ENCODE measurements at regions of chrX and their contacts with region 1.

Region 1: GRCh38 chrX:153953342-153953830 is 8.9 kb upstream of the RENBP start:
- DNase-seq: peak; percentile 79
- ATAC-seq: peak; percentile 70 to 80

Region 2: DNA sequence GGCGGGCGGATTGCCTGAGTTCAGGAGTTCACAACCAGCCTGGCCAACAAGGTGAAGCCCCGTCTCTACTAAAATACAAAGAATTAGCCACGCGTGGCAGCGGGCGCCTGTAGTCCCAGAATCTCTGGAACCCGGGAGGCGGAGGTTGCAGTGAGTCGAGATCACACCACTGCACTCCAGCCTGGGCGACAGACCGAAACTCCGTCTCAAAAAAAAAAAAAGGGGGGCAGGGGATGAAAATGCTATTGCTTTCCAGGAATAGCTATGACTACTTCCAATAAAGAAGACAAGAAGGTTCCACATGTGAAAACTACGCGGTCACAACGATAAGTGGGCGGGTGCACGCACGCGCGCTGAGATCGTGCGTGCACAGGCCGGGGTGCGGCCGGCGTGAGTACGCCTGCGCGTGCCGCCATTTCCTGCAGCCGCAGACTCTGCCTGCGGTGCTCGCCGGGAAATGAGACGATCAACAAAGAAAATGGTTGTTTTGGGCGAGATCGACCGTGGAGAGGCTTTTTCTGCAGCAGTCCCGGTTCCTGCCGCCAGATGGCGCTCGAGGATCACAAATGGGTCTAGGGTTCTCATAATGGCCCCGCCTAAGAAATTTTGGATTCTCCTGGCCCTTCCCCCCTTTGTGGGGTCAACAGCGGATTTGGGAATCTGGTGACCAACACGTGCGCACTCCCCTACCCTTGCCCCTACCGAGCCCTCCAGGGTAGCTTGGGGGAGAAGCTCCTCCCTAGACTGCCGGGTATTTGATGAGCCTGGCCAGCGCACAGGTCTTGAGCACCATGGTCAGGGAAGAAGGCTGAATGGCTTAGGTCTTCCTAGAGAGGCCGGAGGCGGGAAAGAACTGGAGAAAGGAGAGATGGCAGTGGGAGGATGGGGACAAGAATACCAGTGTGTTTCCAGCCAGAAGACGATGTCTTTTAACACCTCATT is 994.6 kb before region 1 on chrX:
- intact Hi-C with region 1: loop called in 1 of 2 experiments (anchors 10 kb)
- DNase-seq: peak; percentile 89
- ATAC-seq: peak; percentile 99

Region 3: GRCh38 chrX:153763989-153764755 is 189.2 kb before region 1 on chrX and contains the start of gene PLXNB3:
- intact Hi-C with region 1: loop called (anchors 5 kb)
- DNase-seq: peak; percentile 83
- ATAC-seq: peak; percentile 81 to 84
- total RNA-seq, gene PLXNB3: 5.9 to 7.1 TPM

Region 4: GRCh38 chrX:153934473-153935325 is 18.7 kb before region 1 on chrX and contains the start of gene NAA10:
- intact Hi-C with region 1: no loop called
- DNase-seq: peak; percentile 81
- ATAC-seq: peak; percentile 97 to 99
- total RNA-seq, gene NAA10: 67.4 to 81.4 TPM

Measured in left cardiac atrium (tissue), 4 donors.